CD4-positive, alpha-beta memory T cell (primary cell): ENCODE measurements at regions of chr5 and their contacts with region 1.

Region 1: DNA sequence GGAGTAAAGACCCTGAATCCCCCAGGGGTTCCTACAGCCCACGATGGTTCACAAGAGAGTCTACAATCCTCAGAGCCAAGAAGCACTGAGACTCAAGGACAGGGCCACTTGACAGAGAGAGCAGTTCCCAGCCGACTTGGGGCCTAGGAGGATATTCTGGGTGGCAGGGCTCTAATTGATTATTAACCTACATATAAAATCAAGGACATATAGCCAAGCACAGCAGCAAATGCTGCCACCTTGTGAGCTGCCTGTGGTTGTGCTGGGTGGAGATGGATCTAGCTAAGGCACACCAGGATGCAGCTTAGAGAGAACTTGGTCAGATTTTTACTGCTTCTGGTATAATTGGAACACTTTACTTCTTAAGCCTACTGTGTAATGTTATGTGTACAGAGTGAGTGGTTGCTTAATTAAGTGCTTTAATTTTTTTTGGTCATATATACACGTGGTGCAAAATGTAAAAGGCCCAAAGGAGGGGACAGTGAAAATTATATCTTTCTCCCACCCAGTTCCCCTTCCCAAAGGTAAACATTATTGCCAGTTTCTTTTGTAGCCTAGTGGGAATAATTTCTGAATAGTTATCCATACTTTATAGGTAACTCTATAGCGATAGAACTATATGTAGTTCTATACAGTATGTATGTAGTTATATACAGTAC is 78.8 kb downstream of the F2RL2 start:
- DNase-seq: peak; percentile 61 to 75 (median 69)
- H3K4me3 ChIP-seq: peak overlapping the region; percentile 12 to 46
- H3K4me3 Mint-ChIP-seq: peak overlapping the region; percentile 80 to 89 (median 83)
- H3K27ac ChIP-seq: peak overlapping the region; percentile 82
- H3K27ac Mint-ChIP-seq: peak overlapping the region; percentile 91 to 99 (median 99)
- H3K4me1 ChIP-seq: peaks cover 96% of the 10 kb centered on the region
- H3K4me1 Mint-ChIP-seq: peaks cover 79 to 95% (median 87%) of the 10 kb centered on the region in 4 donors
- H3K27me3 ChIP-seq: no peaks in the 10 kb centered on the region
- H3K27me3 Mint-ChIP-seq: no peaks in the 10 kb centered on the region

Region 2: DNA sequence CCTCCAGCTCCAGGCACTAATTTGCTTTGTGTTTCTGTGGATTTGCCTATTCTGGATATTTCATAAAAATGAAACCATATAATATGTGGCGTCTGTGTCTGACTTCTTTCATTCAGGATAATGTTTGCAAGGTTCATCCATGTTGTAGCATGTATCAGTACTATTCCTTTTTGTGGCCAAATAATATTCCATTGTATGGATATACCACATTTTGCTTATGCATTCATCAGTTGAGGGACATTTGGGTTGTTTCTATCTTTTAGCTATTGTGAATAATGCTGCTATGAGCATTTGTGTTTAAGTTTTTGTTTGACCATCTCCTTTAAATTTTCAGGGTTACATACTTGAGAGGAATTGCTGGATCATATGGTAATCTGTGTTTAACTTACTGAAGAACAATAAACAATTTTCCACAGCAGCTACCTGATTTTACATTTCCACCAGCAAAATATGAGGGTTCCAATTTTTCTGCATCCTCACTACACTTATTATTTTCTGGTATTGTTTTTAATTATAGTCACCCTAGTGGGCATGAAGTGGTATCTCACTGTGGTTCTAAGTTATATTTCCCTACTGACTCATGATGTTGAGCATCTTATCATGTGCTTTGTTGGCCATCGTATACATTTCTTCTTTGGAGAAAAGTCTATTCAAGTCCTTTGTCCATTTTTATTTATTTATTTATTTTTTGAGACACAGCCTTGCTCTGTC is 1556.0 kb before region 1 on chr5:
- CTCF ChIA-PET with region 1: no interaction called
- POLR2A ChIA-PET with region 1: no interaction called
- intact Hi-C with region 1: no loop called
- DNase-seq: no peak
- H3K4me3 ChIP-seq: no peak overlapping the region
- H3K4me3 Mint-ChIP-seq: no peak overlapping the region
- H3K27ac ChIP-seq: no peak overlapping the region
- H3K27ac Mint-ChIP-seq: no peak overlapping the region
- H3K4me1 ChIP-seq: no peaks in the 10 kb centered on the region
- H3K4me1 Mint-ChIP-seq: no peaks in the 10 kb centered on the region
- H3K27me3 ChIP-seq: no peaks in the 10 kb centered on the region
- H3K27me3 Mint-ChIP-seq: peaks cover 0 to 2% of the 10 kb centered on the region in 2 donors

Region 3: DNA sequence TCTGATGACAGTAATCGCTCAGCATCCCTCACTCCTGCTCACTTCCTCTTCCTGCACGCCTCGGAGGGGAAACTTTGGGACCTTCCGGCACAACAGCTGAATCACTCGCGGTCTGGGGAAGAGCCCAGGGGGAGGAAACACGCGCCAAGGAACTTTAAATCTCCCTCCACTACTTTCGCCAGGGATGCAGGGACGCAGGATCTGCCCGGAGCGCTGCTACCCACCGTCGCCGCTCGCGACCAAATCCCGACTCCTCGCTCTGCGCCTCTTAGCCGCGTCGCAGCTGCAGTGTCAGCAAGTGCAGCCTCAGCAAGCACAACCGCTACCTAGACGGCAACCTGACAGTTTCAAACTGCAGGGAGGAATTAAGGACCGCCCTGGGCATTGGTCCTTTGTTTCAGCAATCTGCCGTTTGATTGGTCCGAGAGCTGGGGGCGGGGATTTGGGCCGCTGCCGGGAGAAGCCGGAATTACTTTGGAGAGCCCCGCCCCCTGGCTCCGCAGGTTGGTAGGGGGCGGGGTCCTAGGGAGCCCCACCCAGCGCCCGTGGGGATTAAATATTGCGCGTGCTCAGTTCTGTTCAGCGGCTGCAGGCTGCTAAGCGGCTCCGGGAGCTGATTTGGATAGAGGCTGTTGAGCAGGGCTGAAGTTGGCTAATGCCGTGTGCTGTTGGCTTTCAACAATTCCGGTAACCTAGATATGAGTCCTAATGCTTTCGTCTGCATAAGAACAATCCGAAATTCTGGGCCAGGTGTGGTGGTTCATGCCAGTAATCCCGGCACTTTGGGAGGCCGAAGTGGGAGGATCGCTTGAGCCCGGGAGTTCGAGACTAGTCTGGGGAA is 827.1 kb before region 1 on chr5 and contains the start of gene POC5:
- CTCF ChIA-PET with region 1: no interaction called
- POLR2A ChIA-PET with region 1: no interaction called
- intact Hi-C with region 1: loop called (anchors 5 kb)
- DNase-seq: peak; percentile 98 to 99 (median 98)
- H3K4me3 ChIP-seq: peak within 1 kb of the TSS; percentile 74 to 95
- H3K4me3 Mint-ChIP-seq: peak within 1 kb of the TSS; percentile 99 to 100 (median 100)
- H3K27ac ChIP-seq: peak within 1 kb of the TSS; percentile 74
- H3K27ac Mint-ChIP-seq: peak within 1 kb of the TSS; percentile 98 to 100 (median 99)
- H3K4me1 ChIP-seq: peaks cover 18% of the 10 kb centered on the region
- H3K4me1 Mint-ChIP-seq: peaks cover 29 to 43% (median 36%) of the 10 kb centered on the region in 4 donors
- H3K27me3 ChIP-seq: no peaks in the 10 kb centered on the region
- H3K27me3 Mint-ChIP-seq: no peaks in the 10 kb centered on the region
- total RNA-seq, gene POC5: 15.1 to 20.0 TPM

Region 4: GRCh38 chr5:76256116-76256889 is 288.1 kb before region 1 on chr5:
- CTCF ChIA-PET with region 1: interaction called, 6 read pairs
- POLR2A ChIA-PET with region 1: interaction called, 8 read pairs
- intact Hi-C with region 1: loop called (anchors 1 kb)
- DNase-seq: peak; percentile 55 to 70 (median 64)
- H3K4me3 ChIP-seq: no peak overlapping the region
- H3K4me3 Mint-ChIP-seq: peak overlapping the region in 4 of 8 donors; percentile 17 to 70 (median 36)
- H3K27ac ChIP-seq: no peak overlapping the region
- H3K27ac Mint-ChIP-seq: peak overlapping the region in 1 of 7 donors; percentile 14
- H3K4me1 ChIP-seq: peaks cover 4% of the 10 kb centered on the region
- H3K4me1 Mint-ChIP-seq: peaks cover 6 to 9% (median 7%) of the 10 kb centered on the region in 4 donors
- H3K27me3 ChIP-seq: no peaks in the 10 kb centered on the region
- H3K27me3 Mint-ChIP-seq: peaks cover 0 to 6% of the 10 kb centered on the region in 2 donors

Region 5: GRCh38 chr5:76331126-76331525 is 213.3 kb before region 1 on chr5:
- CTCF ChIA-PET with region 1: interaction called, 20 read pairs
- POLR2A ChIA-PET with region 1: interaction called, 38 read pairs
- intact Hi-C with region 1: no loop called
- DNase-seq: peak; percentile 40 to 67 (median 50)
- H3K4me3 ChIP-seq: no peak overlapping the region
- H3K4me3 Mint-ChIP-seq: peak overlapping the region; percentile 13 to 86 (median 76)
- H3K27ac ChIP-seq: peak overlapping the region; percentile 49
- H3K27ac Mint-ChIP-seq: peak overlapping the region; percentile 87 to 96 (median 93)
- H3K4me1 ChIP-seq: peaks cover 74% of the 10 kb centered on the region
- H3K4me1 Mint-ChIP-seq: peaks cover 62 to 81% (median 71%) of the 10 kb centered on the region in 4 donors
- H3K27me3 ChIP-seq: no peaks in the 10 kb centered on the region
- H3K27me3 Mint-ChIP-seq: no peaks in the 10 kb centered on the region

Region 6: GRCh38 chr5:76473661-76474060 is 70.7 kb before region 1 on chr5:
- CTCF ChIA-PET with region 1: interaction called, 22 read pairs
- POLR2A ChIA-PET with region 1: interaction called, 56 read pairs
- intact Hi-C with region 1: loop called (anchors 1 kb)
- DNase-seq: peak; percentile 77 to 89 (median 81)
- H3K4me3 ChIP-seq: no peak overlapping the region
- H3K4me3 Mint-ChIP-seq: peak overlapping the region; percentile 42 to 76 (median 58)
- H3K27ac ChIP-seq: peak overlapping the region; percentile 23
- H3K27ac Mint-ChIP-seq: peak overlapping the region; percentile 90 to 99 (median 92)
- H3K4me1 ChIP-seq: peaks cover 90% of the 10 kb centered on the region
- H3K4me1 Mint-ChIP-seq: peaks cover 59 to 91% (median 77%) of the 10 kb centered on the region in 4 donors
- H3K27me3 ChIP-seq: no peaks in the 10 kb centered on the region
- H3K27me3 Mint-ChIP-seq: no peaks in the 10 kb centered on the region

Region 7: DNA sequence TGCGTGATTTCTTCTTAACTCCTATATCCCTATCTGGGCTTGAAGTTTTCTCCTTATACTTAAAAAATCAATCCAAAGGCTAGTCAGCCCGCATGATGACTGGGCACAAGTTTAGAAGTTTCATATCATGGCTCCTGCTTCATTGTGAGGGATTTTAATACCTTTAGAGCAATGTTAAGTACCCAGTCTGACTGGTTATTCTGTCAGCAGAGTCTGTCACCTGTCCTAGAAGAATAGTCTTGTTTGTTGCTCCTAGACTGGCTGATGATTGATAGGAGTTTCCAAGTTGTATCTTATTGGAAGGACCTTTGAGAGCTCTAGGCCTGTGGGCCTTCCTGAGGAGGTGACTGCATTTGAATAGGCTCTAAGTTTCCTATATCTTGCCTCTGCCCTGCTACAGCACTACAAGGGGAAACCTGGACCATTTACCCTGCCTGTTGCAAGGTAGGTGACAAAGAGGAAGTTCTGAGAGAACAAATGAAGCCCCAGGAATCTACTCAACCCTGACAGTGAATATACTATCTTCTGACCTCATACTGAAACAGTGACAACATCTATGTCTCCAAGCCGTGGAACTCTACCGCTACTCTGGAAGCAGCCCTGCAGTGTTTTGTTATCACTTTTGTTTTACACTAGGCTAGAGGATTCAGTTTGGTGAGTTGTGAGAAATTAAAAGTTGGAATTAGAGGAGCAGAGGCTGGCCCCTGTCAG is 12.3 kb after region 1 on chr5:
- CTCF ChIA-PET with region 1: interaction called, 10 read pairs
- POLR2A ChIA-PET with region 1: interaction called, 4 read pairs
- intact Hi-C with region 1: no loop called
- DNase-seq: no peak
- H3K4me3 ChIP-seq: no peak overlapping the region
- H3K4me3 Mint-ChIP-seq: peak overlapping the region in 2 of 8 donors; percentile 23 to 28
- H3K27ac ChIP-seq: peak overlapping the region; percentile 12
- H3K27ac Mint-ChIP-seq: peak overlapping the region; percentile 59 to 90 (median 74)
- H3K4me1 ChIP-seq: peaks cover 23% of the 10 kb centered on the region
- H3K4me1 Mint-ChIP-seq: peaks cover 35 to 59% (median 53%) of the 10 kb centered on the region in 4 donors
- H3K27me3 ChIP-seq: no peaks in the 10 kb centered on the region
- H3K27me3 Mint-ChIP-seq: no peaks in the 10 kb centered on the region

Region 8: DNA sequence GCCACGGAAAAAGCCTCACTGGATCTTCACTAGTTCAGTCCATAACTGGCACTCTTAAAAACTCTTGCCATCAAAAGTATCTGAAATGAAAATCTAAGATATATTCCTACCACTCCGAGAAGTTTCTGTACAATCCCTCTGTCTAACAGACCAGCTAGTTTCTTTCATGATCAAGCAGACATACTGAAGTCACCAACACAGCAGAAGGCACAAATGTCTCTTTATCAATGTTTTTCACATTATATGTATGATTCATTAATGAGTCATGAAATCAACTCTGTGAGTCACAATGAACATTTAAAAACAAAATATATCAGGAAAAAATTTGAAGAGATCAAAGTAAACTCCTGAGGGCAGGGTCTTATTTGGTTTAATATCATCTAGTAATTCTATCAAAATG is 222.3 kb after region 1 on chr5:
- CTCF ChIA-PET with region 1: no interaction called
- POLR2A ChIA-PET with region 1: no interaction called
- intact Hi-C with region 1: no loop called
- DNase-seq: no peak
- H3K4me3 ChIP-seq: no peak overlapping the region
- H3K4me3 Mint-ChIP-seq: no peak overlapping the region
- H3K27ac ChIP-seq: no peak overlapping the region
- H3K27ac Mint-ChIP-seq: peak overlapping the region in 1 of 7 donors; percentile 2
- H3K4me1 ChIP-seq: no peaks in the 10 kb centered on the region
- H3K4me1 Mint-ChIP-seq: peaks cover 0 to 7% (median 2%) of the 10 kb centered on the region in 4 donors
- H3K27me3 ChIP-seq: no peaks in the 10 kb centered on the region
- H3K27me3 Mint-ChIP-seq: no peaks in the 10 kb centered on the region